ENCODE measurements at regions of chr17 and their contacts with region 1.

Region 1: GRCh38 chr17:49556223-49556971 is 19.3 kb upstream of the NXPH3 start:
- DNase-seq: peak; percentile 76 to 77
- H3K4me3 ChIP-seq: no peak overlapping the region
- H3K27ac ChIP-seq: no peak overlapping the region
- H3K4me1 ChIP-seq: peaks cover 17 to 21% of the 10 kb centered on the region in 2 donors
- H3K27me3 ChIP-seq: no peaks in the 10 kb centered on the region
- CTCF ChIP-seq: peak; percentile 81 to 98 (median 94)
- POLR2A ChIP-seq: no peak

Region 2: GRCh38 chr17:49315551-49316257 is 240.7 kb before region 1 on chr17:
- intact Hi-C with region 1: loop called (anchors 10 kb)
- DNase-seq: peak; percentile 76 to 81
- H3K4me3 ChIP-seq: no peak overlapping the region
- H3K27ac ChIP-seq: no peak overlapping the region
- H3K4me1 ChIP-seq: peaks cover 0 to 5% of the 10 kb centered on the region in 2 donors
- H3K27me3 ChIP-seq: no peaks in the 10 kb centered on the region
- CTCF ChIP-seq: peak; percentile 53 to 99 (median 84)
- POLR2A ChIP-seq: no peak

Region 3: DNA sequence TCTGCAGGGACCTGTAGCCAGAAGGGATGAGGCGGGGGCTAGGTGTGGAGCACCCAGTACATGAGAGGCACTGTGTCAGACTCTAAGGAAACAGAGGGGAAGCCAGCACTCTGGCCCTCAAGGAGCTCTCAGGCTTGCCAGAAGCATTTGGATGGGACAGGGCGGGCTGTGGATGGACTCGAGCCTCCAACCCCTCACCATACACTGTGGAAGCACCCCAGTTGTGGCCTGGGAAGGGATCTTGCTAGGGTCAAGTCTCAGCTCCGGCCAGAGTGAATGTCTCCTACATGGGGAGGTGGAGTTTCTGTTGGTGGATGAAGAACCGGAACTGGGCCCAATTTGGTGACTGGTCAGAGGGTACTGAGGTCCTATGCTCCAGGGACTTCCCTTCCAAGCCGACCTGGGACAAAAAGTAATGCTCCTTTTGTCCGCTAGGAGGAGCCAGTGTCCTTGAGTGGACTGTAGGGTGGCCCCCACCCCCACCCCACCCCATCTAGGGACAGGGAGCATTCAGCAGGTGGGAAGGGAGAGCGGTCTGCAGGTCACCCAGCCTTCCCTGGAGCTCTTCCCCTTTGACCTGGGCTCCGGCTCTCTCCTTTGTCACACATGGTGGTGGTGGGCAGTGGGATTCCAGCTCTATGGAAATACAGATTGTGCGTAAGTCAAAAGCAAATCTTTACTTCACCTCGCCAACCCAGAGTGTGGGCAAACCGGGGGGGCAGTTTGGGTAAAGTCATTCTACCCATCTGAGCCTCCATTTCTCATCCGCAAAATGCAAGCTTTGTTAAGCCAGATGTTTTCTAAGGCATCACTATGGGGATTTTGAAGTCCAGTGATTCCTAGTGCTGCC is 121.4 kb before region 1 on chr17:
- intact Hi-C with region 1: loop called (anchors 5 kb)
- DNase-seq: peak; percentile 35 to 44
- H3K4me3 ChIP-seq: no peak overlapping the region
- H3K27ac ChIP-seq: no peak overlapping the region
- H3K4me1 ChIP-seq: no peaks in the 10 kb centered on the region
- H3K27me3 ChIP-seq: no peaks in the 10 kb centered on the region
- CTCF ChIP-seq: peak; percentile 24 to 79 (median 54)
- POLR2A ChIP-seq: no peak

Region 4: DNA sequence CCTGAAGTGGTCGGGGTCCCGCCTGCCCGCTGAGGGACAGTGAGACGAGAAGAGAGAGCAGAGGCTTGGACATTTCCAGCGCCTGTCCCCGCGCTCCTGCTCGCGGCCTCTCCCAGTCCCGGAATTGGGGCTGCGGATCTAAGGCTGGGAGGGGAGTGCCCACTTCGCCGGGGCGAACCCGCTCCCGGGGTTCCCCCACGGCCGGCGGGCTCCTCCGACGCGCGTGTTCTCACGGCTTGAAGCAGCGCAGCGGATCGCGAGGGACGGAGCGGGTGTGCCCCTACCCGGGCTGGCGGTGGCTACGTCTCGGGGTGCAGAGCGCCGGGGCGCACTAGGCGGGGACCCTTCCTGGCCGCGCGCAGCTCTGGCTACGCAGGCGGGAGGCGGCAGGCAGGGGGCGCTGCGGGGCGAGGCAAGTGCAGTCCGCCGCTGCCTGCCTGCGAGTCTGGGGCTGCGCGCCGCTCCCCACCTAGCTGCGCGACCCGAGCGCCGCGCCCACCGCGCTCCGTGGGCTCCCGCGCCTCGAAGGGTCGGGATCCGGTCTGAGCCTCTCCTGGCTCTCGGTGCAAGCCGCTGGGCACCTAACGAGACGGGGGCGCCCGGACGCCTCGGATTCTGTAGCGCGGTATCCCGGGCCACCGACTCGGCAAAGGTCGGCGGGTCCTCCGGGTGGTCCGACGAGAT is 60.1 kb before region 1 on chr17:
- intact Hi-C with region 1: loop called (anchors 2 kb)
- DNase-seq: peak; percentile 76 to 77
- H3K4me3 ChIP-seq: peak overlapping the region in 1 of 3 donors; percentile 37
- H3K27ac ChIP-seq: no peak overlapping the region
- H3K4me1 ChIP-seq: peaks cover 20 to 36% of the 10 kb centered on the region in 2 donors
- H3K27me3 ChIP-seq: peaks cover 23% of the 10 kb centered on the region
- CTCF ChIP-seq: peak; percentile 30 to 94 (median 78)
- POLR2A ChIP-seq: no peak

Measured in thyroid gland (tissue), 4 donors.